ENCODE measurements at regions of chr21 and their contacts with region 1.

Region 1: DNA sequence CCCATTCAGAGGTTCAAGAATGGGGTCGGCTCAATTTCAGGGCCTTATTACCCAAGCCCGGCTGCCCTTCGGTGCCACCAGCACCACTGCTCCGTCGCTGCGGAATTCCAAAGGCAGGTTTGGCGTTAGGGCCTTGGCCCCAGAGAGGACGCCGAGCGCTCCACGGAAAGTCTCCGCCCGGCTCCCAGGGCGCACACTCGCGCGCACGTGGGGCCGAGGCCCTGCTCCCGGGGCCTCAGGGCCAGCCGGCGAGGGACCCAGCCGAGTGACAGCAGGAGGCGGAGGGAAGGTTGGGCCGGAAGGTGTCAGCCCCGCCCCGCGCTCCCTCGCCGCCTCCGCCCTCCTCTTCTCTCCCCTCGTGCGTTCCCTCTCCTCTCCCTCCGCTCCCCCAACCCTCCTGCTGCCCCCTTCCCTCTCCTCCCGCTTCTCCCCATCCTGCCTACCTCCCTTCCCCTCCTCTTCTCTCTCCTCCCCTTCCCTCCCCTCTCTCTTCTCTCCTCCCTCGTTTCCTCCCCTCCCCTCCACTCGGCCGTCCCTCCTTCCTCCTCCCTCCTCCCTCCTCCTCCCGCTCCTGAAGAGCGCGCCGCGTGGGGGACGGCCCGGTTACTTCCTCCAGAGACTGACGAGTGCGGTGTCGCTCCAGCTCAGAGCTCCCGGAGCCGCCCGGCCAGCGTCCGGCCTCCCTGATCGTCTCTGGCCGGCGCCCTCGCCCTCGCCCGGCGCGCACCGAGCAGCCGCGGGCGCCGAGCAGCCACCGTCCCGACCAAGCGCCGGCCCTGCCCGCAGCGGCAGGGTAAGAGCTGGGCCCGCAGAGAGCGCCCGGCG is at the start of gene ETS2:
- DNase-seq: peak; percentile 93 to 96 (median 95)
- ATAC-seq: peak; percentile 88 to 94 (median 92)
- H3K4me3 ChIP-seq: peak within 1 kb of the TSS; percentile 67 to 99 (median 94)
- H3K27ac ChIP-seq: peak within 1 kb of the TSS; percentile 87 to 99 (median 98)
- H3K4me1 ChIP-seq: peaks cover 0 to 42% (median 17%) of the 10 kb centered on the region in 12 donors
- H3K27me3 ChIP-seq: no peaks in the 10 kb centered on the region
- CTCF ChIP-seq: peak in 3 of 12 donors; percentile 10 to 16 (median 13)
- POLR2A ChIP-seq: peak in 1 of 2 donors; percentile 93
- total RNA-seq, gene ETS2: 27.9 to 92.7 (median 45.1) TPM

Region 2: GRCh38 chr21:38712071-38712470 is 93.5 kb before region 1 on chr21:
- intact Hi-C with region 1: no loop called
- DNase-seq: peak in 1 of 5 donors; percentile 40
- ATAC-seq: peak in 3 of 4 donors; percentile 55 to 62 (median 56)
- H3K4me3 ChIP-seq: no peak overlapping the region
- H3K27ac ChIP-seq: no peak overlapping the region
- H3K4me1 ChIP-seq: no peaks in the 10 kb centered on the region
- H3K27me3 ChIP-seq: peaks cover 0 to 3% (median 0%) of the 10 kb centered on the region in 9 donors
- CTCF ChIP-seq: peak; percentile 19 to 61 (median 40)
- POLR2A ChIP-seq: no peak

Region 3: DNA sequence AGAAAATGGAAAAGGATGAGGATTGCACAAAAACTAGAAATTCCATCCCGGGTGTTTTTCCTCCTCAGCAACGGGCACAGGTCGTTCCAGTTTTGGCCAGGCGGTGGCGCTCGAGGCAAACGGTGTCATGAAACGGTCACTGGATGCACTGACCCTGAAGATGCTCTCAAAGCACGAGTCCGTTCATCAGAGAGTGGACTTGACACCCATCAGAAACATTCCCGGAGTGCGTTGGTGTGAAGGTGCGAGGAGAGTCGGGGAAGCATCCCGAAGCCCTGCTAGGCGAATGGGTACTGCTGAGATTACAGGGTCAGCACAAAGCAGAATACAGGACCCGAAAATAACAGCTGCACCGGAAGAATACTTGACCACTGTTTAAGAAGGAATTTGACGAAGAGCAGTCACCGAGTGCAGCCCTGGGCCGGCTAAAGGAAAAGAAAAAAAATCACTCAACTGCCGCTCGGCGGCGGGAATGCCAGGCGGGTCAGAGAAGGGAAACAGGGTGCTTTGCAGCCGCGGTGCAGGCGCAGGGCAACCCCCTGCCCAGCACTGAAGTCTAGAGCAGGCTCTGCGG is 71.5 kb before region 1 on chr21:
- intact Hi-C with region 1: loop called in 8 of 10 experiments (anchors 1 to 10 kb)
- DNase-seq: peak; percentile 83 to 94 (median 87)
- ATAC-seq: peak; percentile 78 to 94 (median 93)
- H3K4me3 ChIP-seq: peak overlapping the region in 9 of 12 donors; percentile 9 to 50 (median 38)
- H3K27ac ChIP-seq: peak overlapping the region in 11 of 12 donors; percentile 19 to 85 (median 65)
- H3K4me1 ChIP-seq: peaks cover 0 to 25% (median 8%) of the 10 kb centered on the region in 12 donors
- H3K27me3 ChIP-seq: no peaks in the 10 kb centered on the region
- CTCF ChIP-seq: peak; percentile 86 to 96 (median 92)
- POLR2A ChIP-seq: peak in 1 of 2 donors; percentile 17

Region 4: GRCh38 chr21:38913120-38913892 is 107.8 kb after region 1 on chr21:
- intact Hi-C with region 1: loop called in 9 of 10 experiments (anchors 2 to 5 kb)
- DNase-seq: peak; percentile 65 to 80 (median 73)
- ATAC-seq: peak; percentile 57 to 80 (median 72)
- H3K4me3 ChIP-seq: peak overlapping the region in 7 of 12 donors; percentile 15 to 34 (median 31)
- H3K27ac ChIP-seq: peak overlapping the region; percentile 48 to 87 (median 70)
- H3K4me1 ChIP-seq: peaks cover 0 to 65% (median 34%) of the 10 kb centered on the region in 12 donors
- H3K27me3 ChIP-seq: no peaks in the 10 kb centered on the region
- CTCF ChIP-seq: no peak
- POLR2A ChIP-seq: no peak

Region 5: DNA sequence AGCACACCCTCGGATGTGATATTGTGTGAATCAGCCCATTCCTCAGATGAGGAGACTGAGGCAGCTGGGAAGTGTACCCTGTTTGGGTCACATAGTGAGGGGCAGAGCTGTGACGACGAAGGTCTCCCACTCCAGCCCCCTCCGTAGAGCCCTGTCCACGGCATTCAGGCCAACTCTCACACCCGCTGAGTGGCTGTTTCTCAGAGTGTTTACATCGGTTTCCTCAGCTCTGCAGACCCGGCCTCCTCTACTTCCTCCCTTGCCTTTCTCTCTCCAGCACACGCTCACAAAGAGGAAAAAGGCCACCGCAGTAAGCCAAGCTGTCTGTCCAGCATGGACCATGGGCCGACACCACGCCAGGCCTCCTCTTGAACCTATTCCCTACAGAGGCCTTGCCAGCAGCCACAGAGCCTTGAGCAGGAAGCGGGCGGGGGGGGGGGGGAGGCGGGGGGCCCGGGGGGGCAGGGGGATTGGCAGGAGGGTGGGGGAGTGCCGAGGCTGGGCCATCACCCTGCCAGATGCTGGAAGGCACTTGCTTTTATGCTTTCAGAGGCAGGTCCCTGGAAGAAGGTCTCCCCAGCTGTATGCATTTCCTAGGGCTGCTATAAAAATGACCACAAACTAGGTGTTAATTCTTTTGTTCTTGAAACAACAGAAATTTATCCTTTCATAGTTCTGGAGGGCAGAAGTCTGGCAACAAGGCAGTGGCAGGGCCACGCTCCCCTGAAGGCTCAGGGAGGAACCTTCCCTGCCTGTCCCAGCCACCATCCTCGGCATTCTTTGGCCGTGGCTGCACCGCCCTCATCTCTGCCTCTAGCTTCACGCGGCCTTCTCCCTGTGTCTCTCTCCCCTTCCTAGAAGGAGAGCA is 199.3 kb after region 1 on chr21:
- intact Hi-C with region 1: loop called in 5 of 10 experiments (anchors 5 to 10 kb)
- DNase-seq: peak; percentile 73 to 84 (median 78)
- ATAC-seq: peak; percentile 54 to 66 (median 60)
- H3K4me3 ChIP-seq: no peak overlapping the region
- H3K27ac ChIP-seq: peak overlapping the region; percentile 75 to 92 (median 83)
- H3K4me1 ChIP-seq: peaks cover 9 to 87% (median 59%) of the 10 kb centered on the region in 12 donors
- H3K27me3 ChIP-seq: no peaks in the 10 kb centered on the region
- CTCF ChIP-seq: no peak
- POLR2A ChIP-seq: no peak

Region 6: GRCh38 chr21:39071623-39072214 is 266.2 kb after region 1 on chr21:
- intact Hi-C with region 1: loop called in 3 of 10 experiments (anchors 1 to 5 kb)
- DNase-seq: no peak
- ATAC-seq: peak in 3 of 4 donors; percentile 33 to 58 (median 44)
- H3K4me3 ChIP-seq: no peak overlapping the region
- H3K27ac ChIP-seq: peak overlapping the region in 6 of 12 donors; percentile 12 to 70 (median 52)
- H3K4me1 ChIP-seq: peaks cover 0 to 45% (median 12%) of the 10 kb centered on the region in 12 donors
- H3K27me3 ChIP-seq: no peaks in the 10 kb centered on the region
- CTCF ChIP-seq: no peak
- POLR2A ChIP-seq: no peak

Region 7: GRCh38 chr21:39137248-39138178 is 332.0 kb after region 1 on chr21:
- intact Hi-C with region 1: loop called in 1 of 10 experiments (anchors 5 kb)
- DNase-seq: no peak
- ATAC-seq: peak in 1 of 4 donors; percentile 26
- H3K4me3 ChIP-seq: no peak overlapping the region
- H3K27ac ChIP-seq: peak overlapping the region in 4 of 12 donors; percentile 11 to 39 (median 32)
- H3K4me1 ChIP-seq: peaks cover 0 to 11% (median 0%) of the 10 kb centered on the region in 12 donors
- H3K27me3 ChIP-seq: no peaks in the 10 kb centered on the region
- CTCF ChIP-seq: no peak
- POLR2A ChIP-seq: no peak

Measured in heart left ventricle (tissue), 16 donors.